ENCODE measurements at regions of chr16 and their contacts with region 1.

Region 1: DNA sequence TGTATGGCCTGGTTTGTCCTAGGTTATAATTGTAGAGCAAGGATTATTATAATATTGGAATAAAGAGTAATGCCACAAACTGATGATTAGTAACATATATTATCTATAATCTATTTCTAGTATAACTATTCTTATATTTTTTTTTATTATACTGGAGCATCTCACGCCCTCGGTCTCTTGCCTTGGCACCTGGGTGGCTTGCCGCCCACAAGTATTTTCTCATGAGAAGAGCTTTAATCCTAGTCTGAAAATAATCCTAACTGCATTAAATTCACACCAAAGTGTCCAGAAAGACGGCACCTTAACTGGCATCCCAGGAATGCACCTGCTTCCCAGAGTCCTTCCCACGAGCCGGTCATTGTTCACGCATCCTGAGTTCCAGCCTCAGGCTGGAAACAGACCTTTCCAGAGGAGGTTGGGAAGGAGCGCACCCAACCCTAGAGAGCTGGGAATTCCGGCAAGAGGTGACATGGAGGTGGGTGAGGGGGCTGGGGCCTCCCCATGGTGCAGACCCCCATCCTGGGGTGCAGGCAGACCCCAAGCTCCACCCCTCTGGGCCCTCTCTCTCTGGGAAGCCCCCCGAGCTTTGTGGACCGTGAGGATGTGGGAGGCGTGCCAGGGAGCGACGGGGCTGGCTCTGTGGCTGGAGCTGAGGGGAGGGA is 15.9 kb downstream of the CHMP1A start:
- DNase-seq: no peak
- ATAC-seq: no peak
- H3K4me3 ChIP-seq: no peak overlapping the region
- H3K27ac ChIP-seq: no peak overlapping the region
- H3K4me1 ChIP-seq: 0 out of 3 replicates have a peak, but pooled peaks cover 3% of the 10 kb centered on the region
- CTCF ChIP-seq: no peak; the same call in 2 of the 3 replicates
- EP300 ChIP-seq: no peak
- POLR2A ChIP-seq: no peak
- RAD21 ChIP-seq: no peak; a peak in 1 of 5 replicates

Region 2: DNA sequence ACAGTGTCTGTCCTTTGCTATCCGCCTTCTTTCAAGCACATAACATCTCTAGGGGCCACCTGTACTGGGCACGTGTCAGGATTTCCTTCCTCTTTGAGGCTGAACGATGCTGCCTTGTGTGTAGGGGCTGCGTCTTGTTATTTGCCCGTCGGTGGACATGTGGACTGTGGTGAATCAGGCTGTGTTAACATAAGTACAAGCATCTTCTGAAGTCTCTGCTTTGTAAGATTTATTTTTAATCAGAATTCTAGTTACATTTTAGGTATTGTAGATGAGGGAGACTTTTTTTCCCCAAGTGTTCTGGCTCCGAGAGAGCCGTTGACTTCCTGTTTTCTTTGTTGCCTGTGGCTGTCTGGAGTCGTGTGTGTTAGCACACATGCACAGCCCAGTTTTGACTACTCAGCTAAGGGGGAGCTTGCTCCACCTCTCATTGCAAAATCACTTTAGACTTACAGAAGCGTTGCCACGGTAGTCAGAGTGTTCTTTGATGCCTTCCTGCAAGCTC is 107.3 kb before region 1 on chr16:
- CTCF ChIA-PET with region 1: no interaction called
- POLR2A ChIA-PET with region 1: no interaction called
- DNase-seq: no peak
- ATAC-seq: no peak
- H3K4me3 ChIP-seq: no peak overlapping the region
- H3K27ac ChIP-seq: no peak overlapping the region
- H3K4me1 ChIP-seq: no peaks in the 10 kb centered on the region
- CTCF ChIP-seq: no peak
- EP300 ChIP-seq: no peak
- POLR2A ChIP-seq: no peak
- RAD21 ChIP-seq: no peak

Region 3: DNA sequence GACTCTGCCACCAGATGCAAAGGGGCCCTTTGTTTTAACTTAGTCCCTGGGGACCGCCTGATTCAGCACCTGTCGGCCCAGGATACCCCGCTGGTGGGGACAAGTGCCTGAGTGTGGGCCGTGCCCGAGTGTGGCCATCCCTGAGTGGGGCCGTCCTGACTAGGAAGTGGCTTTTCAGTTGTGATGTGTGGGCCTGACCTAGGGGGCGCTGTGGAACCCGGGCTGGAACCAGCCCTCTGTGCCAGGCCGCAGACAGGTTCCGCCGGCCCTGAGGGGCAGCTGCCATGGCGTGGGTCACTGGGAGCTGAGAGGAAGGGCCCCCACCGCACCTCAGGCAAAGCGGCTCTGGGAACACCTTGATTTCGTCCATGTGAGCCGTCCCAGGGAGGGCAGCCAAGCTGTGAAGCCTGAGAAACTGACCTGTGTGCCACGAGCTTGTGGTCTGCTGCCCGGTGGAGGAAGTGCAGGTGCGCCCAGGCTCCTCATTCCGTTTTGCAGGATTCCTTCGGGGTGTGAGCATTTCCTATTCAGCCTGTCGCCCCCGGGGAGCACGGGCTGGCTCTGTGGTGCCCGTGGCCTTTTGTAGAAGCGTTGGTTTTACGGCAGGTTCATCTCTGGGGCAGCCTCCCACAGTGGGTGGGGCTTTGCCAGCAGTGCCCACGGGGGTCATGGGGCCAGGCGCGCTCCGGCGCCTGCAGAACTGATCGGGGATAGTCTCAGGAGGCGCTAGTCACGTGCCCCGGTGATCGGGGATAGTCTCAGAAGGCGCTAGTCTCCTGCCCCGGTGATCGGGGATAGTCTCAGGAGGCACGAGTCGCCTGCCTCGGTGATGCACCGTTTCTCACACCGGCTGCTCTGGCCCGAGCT is 75.8 kb before region 1 on chr16:
- CTCF ChIA-PET with region 1: interaction called, 25 read pairs
- POLR2A ChIA-PET with region 1: no interaction called
- DNase-seq: peak; percentile 50 to 74
- ATAC-seq: peak; percentile 45 to 60
- H3K4me3 ChIP-seq: peak overlapping the region; percentile 99; the same call in 1 of the 3 replicates
- H3K27ac ChIP-seq: peak overlapping the region; percentile 37 to 96; a peak in 5 of 6 replicates
- H3K4me1 ChIP-seq: peaks cover 39% of the 10 kb centered on the region
- CTCF ChIP-seq: peak; percentile 76
- EP300 ChIP-seq: 0 out of 5 replicates have a peak, but pooled peaks of 1 of the 2 experiments have one; percentile 8
- POLR2A ChIP-seq: peak; percentile 37; the same call in 1 of the 2 replicates
- RAD21 ChIP-seq: no peak

Region 4: DNA sequence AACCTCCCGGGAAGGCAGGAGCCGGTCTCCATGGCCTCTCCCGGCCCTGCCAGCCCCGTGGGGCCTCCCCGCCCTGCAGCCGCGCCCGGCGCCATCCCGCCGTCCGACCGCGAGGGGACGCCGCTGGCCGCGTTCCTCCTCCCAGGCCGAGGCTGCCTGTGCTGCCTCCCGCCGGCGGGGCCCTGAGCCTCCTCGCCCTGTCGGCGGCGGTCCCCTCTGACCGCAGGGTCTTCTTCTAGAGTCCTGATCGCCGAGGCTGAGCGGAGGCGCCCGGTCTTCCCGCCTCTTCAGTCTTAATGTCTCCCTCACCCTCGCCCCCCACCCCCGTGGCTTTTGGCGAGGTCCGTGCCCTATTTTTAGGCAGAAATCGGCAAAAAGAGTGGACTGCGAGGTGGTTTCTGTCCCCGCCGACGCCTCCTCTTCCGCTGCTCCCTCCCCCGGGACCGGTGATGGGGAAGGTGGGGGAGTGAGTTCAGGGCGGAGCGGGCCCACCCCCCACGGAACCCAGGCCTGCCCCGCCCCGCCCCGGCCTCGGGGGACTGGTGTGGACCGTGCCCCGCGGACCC is 66.8 kb before region 1 on chr16:
- CTCF ChIA-PET with region 1: interaction called, 18 read pairs
- POLR2A ChIA-PET with region 1: no interaction called
- DNase-seq: peak; percentile 84 to 92
- ATAC-seq: peak; percentile 69 to 90
- H3K4me3 ChIP-seq: peak overlapping the region; percentile 73
- H3K27ac ChIP-seq: peak overlapping the region; percentile 90 to 97
- H3K4me1 ChIP-seq: peaks cover 15% of the 10 kb centered on the region
- CTCF ChIP-seq: peak; percentile 90
- EP300 ChIP-seq: no peak
- POLR2A ChIP-seq: no peak
- RAD21 ChIP-seq: peak; percentile 79 to 91

Region 5: GRCh38 chr16:89581861-89582563 is 59.6 kb before region 1 on chr16:
- CTCF ChIA-PET with region 1: interaction called, 17 read pairs
- POLR2A ChIA-PET with region 1: no interaction called
- DNase-seq: peak in 1 of 2 experiments; percentile 43
- ATAC-seq: peak in 1 of 2 experiments; percentile 34; a peak in 3 of 6 replicates
- H3K4me3 ChIP-seq: no peak overlapping the region
- H3K27ac ChIP-seq: peak overlapping the region; percentile 78
- H3K4me1 ChIP-seq: peaks cover 22% of the 10 kb centered on the region
- CTCF ChIP-seq: no peak
- EP300 ChIP-seq: no peak
- POLR2A ChIP-seq: no peak
- RAD21 ChIP-seq: no peak

Region 6: DNA sequence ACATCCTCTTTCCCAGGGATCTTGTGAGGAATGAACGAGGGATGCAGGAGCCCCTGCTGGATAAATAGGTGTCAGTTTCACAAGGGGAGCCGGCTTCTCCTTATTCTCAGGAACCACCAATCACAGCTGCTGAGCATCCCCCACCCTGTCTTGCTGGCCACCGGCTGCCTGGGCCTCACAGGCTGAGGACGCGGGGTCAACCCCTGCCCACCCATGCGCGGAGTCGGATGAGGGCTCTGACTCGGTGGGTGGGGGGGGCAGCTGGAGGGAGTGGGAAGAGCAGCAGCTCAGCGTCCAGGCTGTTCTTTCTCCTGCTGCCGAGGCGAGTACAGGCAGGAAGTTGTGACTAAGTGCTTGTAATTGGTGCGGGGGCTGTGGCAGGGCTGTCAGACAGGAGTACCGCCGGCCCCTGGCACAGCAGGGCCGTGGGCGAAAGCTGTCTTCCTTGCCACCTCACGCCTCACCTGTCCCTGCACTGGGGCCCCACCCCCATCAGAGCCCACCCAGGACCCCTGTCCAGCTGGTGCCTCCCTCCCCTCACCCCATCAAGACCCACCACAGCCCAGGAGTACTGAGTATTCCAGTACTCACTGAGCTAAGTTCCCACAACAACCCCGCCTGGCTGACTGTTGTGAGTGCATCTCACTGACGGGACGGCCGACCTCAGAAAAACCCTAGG is 39.2 kb before region 1 on chr16:
- CTCF ChIA-PET with region 1: interaction called, 21 read pairs
- POLR2A ChIA-PET with region 1: no interaction called
- DNase-seq: peak; percentile 55 to 56
- ATAC-seq: peak; percentile 65 to 71
- H3K4me3 ChIP-seq: no peak overlapping the region
- H3K27ac ChIP-seq: peak overlapping the region; percentile 23 to 76; a peak in 4 of 6 replicates
- H3K4me1 ChIP-seq: peaks cover 30% of the 10 kb centered on the region
- CTCF ChIP-seq: no peak
- EP300 ChIP-seq: no peak
- POLR2A ChIP-seq: no peak
- RAD21 ChIP-seq: no peak

Region 7: GRCh38 chr16:89623511-89624261 is 17.9 kb before region 1 on chr16:
- CTCF ChIA-PET with region 1: interaction called, 18 read pairs
- POLR2A ChIA-PET with region 1: no interaction called
- DNase-seq: no peak
- ATAC-seq: peak; percentile 1 to 11; a peak in 3 of 6 replicates
- H3K4me3 ChIP-seq: no peak overlapping the region
- H3K27ac ChIP-seq: no peak overlapping the region
- H3K4me1 ChIP-seq: peaks cover 11% of the 10 kb centered on the region
- CTCF ChIP-seq: no peak
- EP300 ChIP-seq: no peak
- POLR2A ChIP-seq: no peak
- RAD21 ChIP-seq: no peak

Region 8: GRCh38 chr16:89712274-89712781 is 70.7 kb after region 1 on chr16:
- CTCF ChIA-PET with region 1: no interaction called
- POLR2A ChIA-PET with region 1: no interaction called
- DNase-seq: no peak
- ATAC-seq: peak in 1 of 2 experiments; percentile 24; a peak in 3 of 6 replicates
- H3K4me3 ChIP-seq: peak overlapping the region; percentile 87
- H3K27ac ChIP-seq: peak overlapping the region; percentile 86 to 89
- H3K4me1 ChIP-seq: peaks cover 9% of the 10 kb centered on the region; the same call in 2 of the 3 replicates
- CTCF ChIP-seq: no peak
- EP300 ChIP-seq: no peak
- POLR2A ChIP-seq: no peak
- RAD21 ChIP-seq: no peak

Measured in A549 (cell line).